GM12878 (cell line): ENCODE measurements at regions of chr5 and their contacts with region 1.

Region 1: GRCh38 chr5:73591102-73591695 is 25.7 kb downstream of the UTP15 start:
- DNase-seq: peak; percentile 28
- ATAC-seq: peak; percentile 88
- H3K4me3 ChIP-seq: no peak overlapping the region
- H3K27ac ChIP-seq: no peak overlapping the region
- H3K4me1 ChIP-seq: no peaks in the 10 kb centered on the region
- H3K27me3 ChIP-seq: no peaks in the 10 kb centered on the region
- CTCF ChIP-seq: peak; percentile 62 to 87 (median 71)
- EP300 ChIP-seq: no peak
- POLR2A ChIP-seq: no peak
- RAD21 ChIP-seq: peak; percentile 96

Region 2: GRCh38 chr5:73605227-73606020 is 14.2 kb after region 1 on chr5:
- CTCF ChIA-PET with region 1: interaction called, 4 read pairs
- POLR2A ChIA-PET with region 1: no interaction called
- RAD21 ChIA-PET with region 1: no interaction called
- SMC1A ChIA-PET with region 1: interaction called, 16 read pairs
- in situ Hi-C with region 1: no loop called
- intact Hi-C with region 1: no loop called
- DNase-seq: no peak
- ATAC-seq: no peak
- H3K4me3 ChIP-seq: no peak overlapping the region
- H3K27ac ChIP-seq: no peak overlapping the region
- H3K4me1 ChIP-seq: no peaks in the 10 kb centered on the region
- H3K27me3 ChIP-seq: no peaks in the 10 kb centered on the region
- CTCF ChIP-seq: no peak
- EP300 ChIP-seq: no peak
- POLR2A ChIP-seq: no peak
- RAD21 ChIP-seq: no peak

Region 3: GRCh38 chr5:73654171-73654811 is 63.1 kb after region 1 on chr5:
- CTCF ChIA-PET with region 1: interaction called, 15 read pairs
- POLR2A ChIA-PET with region 1: no interaction called
- RAD21 ChIA-PET with region 1: interaction called, 4 read pairs
- SMC1A ChIA-PET with region 1: interaction called, 6 read pairs
- in situ Hi-C with region 1: no loop called
- intact Hi-C with region 1: no loop called
- DNase-seq: peak; percentile 65
- ATAC-seq: peak; percentile 88
- H3K4me3 ChIP-seq: no peak overlapping the region
- H3K27ac ChIP-seq: peak overlapping the region; percentile 59
- H3K4me1 ChIP-seq: peaks cover 23% of the 10 kb centered on the region
- H3K27me3 ChIP-seq: no peaks in the 10 kb centered on the region; a peak in 1 of 4 replicates
- CTCF ChIP-seq: no peak
- EP300 ChIP-seq: peak in 1 of 2 experiments; percentile 69; a peak in 1 of 4 replicates
- POLR2A ChIP-seq: no peak
- RAD21 ChIP-seq: no peak

Region 4: GRCh38 chr5:73687357-73687756 is 96.2 kb after region 1 on chr5:
- CTCF ChIA-PET with region 1: interaction called, 90 read pairs
- POLR2A ChIA-PET with region 1: no interaction called
- RAD21 ChIA-PET with region 1: interaction called, 40 read pairs
- SMC1A ChIA-PET with region 1: interaction called, 64 read pairs
- in situ Hi-C with region 1: no loop called
- intact Hi-C with region 1: loop called (anchors 2 kb)
- DNase-seq: no peak
- ATAC-seq: peak; percentile 81
- H3K4me3 ChIP-seq: no peak overlapping the region
- H3K27ac ChIP-seq: no peak overlapping the region
- H3K4me1 ChIP-seq: peaks cover under 1% of the 10 kb centered on the region; the same call in 1 of the 2 replicates
- H3K27me3 ChIP-seq: no peaks in the 10 kb centered on the region
- CTCF ChIP-seq: no peak
- EP300 ChIP-seq: peak; percentile 83
- POLR2A ChIP-seq: no peak
- RAD21 ChIP-seq: no peak

Region 5: DNA sequence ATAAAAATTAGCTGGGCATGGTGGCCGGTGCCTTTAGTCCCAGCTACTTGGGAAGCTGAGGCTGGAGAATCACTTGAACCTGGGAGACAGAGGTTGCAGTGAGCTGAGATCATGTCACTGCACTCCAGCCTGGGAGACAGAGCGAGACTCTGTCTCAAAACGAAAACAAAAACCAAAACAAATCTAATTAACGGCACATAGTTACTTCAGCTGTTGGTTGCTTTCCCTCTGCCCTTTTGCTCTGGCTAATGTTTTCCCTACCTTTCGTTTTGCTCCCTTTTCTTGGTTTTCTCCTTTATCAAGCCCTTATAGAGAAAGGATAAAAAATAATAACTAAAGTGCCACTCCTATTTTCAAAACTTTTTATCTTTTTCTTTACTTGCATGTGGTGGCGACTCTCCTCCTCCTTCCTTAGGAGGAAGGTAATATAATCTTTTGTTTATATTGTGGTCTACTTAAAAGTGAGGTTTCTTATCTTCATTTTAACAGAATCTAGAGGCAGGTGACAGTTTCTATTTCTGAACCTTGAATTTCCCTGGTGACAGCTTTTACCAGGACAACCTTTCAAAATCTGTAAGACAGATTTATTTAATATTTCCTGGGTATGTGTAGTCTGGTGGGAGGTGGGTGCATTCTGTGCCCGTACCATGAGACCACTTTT is 160.2 kb after region 1 on chr5:
- CTCF ChIA-PET with region 1: interaction called, 7 read pairs
- POLR2A ChIA-PET with region 1: no interaction called
- RAD21 ChIA-PET with region 1: interaction called, 12 read pairs
- SMC1A ChIA-PET with region 1: interaction called, 11 read pairs
- in situ Hi-C with region 1: no loop called
- intact Hi-C with region 1: no loop called
- DNase-seq: no peak
- ATAC-seq: peak; percentile 86
- H3K4me3 ChIP-seq: no peak overlapping the region
- H3K27ac ChIP-seq: peak overlapping the region; percentile 32
- H3K4me1 ChIP-seq: peaks cover 3% of the 10 kb centered on the region; the same call in 1 of the 2 replicates
- H3K27me3 ChIP-seq: peaks cover 0 to 4% of the 10 kb centered on the region in 2 experiments; a peak in 2 of 4 replicates
- CTCF ChIP-seq: no peak
- EP300 ChIP-seq: peak in 1 of 2 experiments; percentile 34; a peak in 1 of 4 replicates
- POLR2A ChIP-seq: no peak
- RAD21 ChIP-seq: no peak

Region 6: GRCh38 chr5:73792687-73793320 is 201.6 kb after region 1 on chr5:
- CTCF ChIA-PET with region 1: interaction called, 565 read pairs
- POLR2A ChIA-PET with region 1: interaction called, 5 read pairs
- RAD21 ChIA-PET with region 1: interaction called, 302 read pairs
- SMC1A ChIA-PET with region 1: interaction called, 415 read pairs
- in situ Hi-C with region 1: loop called (anchors 5 kb)
- intact Hi-C with region 1: loop called (anchors 1 kb)
- DNase-seq: peak; percentile 41
- ATAC-seq: peak; percentile 79
- H3K4me3 ChIP-seq: no peak overlapping the region
- H3K27ac ChIP-seq: no peak overlapping the region
- H3K4me1 ChIP-seq: peaks cover 6% of the 10 kb centered on the region
- H3K27me3 ChIP-seq: no peaks in the 10 kb centered on the region; a peak in 1 of 4 replicates
- CTCF ChIP-seq: peak; percentile 96 to 99 (median 98); a peak in 5 of 6 replicates
- EP300 ChIP-seq: no peak
- POLR2A ChIP-seq: no peak
- RAD21 ChIP-seq: peak; percentile 99